AG04449 (cell line): ENCODE measurements at regions of chr17 and their contacts with region 1.

Region 1: DNA sequence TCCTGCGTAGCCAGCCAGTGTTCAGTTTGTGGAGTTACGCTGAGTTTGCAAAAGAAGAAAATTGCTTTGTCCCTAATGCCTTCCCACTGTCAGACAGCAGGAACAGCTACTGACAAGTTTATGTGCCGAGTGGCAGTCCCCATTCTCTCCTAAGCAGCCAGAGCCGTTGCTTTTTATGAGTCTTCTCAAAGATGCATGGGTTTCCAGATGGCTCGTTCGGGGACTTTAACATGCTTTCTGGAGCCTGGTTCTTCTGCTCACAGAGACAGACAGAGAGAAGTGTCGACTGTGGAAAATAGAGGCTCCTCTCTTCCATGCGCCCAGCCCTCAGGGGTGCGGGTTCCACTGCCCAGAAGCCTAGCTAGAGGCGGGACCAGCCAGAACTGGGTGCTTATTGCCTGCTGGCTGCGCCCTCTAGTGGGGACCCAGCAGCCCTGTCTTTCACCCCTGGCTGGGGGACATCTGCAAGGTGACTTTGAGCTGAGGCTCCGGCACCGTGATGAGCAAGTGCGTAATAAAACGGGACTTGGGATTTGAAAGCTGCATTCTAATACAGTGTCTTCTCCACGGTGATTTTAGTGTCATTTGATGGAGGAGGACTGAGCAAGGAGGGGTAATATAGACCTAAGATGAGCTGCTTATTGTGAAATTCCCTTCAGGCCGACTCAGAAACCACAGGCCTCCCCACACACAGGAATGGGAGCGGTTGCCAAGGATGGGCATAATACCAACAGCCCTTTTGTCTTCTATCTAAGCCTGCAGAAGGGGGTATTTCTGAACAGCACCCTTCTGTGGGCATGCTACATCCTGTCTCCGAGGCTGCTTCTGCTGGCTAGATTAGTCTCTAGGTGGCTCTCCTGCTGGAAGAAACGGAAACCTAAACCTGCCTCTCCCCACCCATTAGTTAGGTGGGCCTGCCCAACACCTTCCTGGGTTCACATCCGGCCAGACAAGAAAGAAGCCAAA is 73.1 kb downstream of the CCDC182 start:
- DNase-seq: peak; percentile 47
- H3K4me3 ChIP-seq: no peak overlapping the region
- CTCF ChIP-seq: peak; percentile 97

Region 2: DNA sequence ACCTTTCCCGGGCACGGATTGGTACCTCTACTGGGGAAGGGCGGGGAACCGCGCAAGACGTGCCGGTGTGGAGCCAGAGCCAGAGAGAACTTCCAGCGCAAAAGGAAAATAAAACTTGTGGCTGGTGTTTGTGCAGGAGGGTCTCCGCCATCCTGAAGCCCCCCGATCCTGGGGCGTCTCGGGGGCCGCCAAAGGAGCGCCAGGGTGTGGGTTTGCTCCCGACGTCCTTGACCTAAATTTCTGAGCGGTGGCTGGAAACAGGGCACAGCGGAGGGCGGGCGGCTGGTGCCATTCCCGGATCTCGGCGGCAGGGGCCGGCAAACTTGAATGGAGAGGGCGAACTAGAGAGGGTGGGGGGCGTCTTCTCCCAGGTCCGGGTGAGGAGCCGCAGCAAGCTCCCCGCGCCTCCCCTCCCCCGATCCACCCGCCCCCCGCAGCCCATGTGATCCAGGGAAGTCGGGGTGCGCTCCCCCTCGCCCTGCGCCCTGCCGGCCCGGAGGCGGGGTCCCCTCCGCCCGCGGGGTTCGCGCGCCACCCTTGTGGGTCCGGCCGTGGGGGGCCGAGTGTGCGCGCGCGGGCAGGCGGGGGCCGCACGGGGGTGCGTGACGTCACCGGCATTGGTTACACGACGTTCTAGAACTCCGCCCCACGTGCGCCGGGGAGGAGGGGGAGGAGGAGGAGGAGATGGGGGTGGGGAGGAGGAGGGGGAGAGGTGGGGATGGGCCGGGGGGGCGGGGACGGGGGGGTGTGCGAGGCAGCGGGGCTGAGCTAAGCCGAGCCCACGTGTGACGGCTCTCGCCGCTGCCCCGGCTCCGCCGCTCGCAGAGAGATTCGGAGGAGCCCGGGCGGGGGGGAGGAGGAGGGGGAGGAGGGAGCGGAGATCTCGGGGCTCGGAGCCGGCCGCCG is 415.9 kb before region 1 on chr17 and contains the start of gene MSI2:
- CTCF ChIA-PET with region 1: interaction called, 13 read pairs
- POLR2A ChIA-PET with region 1: no interaction called
- DNase-seq: peak; percentile 5
- H3K4me3 ChIP-seq: peak within 1 kb of the TSS; percentile 64
- CTCF ChIP-seq: peak; percentile 7

Region 3: DNA sequence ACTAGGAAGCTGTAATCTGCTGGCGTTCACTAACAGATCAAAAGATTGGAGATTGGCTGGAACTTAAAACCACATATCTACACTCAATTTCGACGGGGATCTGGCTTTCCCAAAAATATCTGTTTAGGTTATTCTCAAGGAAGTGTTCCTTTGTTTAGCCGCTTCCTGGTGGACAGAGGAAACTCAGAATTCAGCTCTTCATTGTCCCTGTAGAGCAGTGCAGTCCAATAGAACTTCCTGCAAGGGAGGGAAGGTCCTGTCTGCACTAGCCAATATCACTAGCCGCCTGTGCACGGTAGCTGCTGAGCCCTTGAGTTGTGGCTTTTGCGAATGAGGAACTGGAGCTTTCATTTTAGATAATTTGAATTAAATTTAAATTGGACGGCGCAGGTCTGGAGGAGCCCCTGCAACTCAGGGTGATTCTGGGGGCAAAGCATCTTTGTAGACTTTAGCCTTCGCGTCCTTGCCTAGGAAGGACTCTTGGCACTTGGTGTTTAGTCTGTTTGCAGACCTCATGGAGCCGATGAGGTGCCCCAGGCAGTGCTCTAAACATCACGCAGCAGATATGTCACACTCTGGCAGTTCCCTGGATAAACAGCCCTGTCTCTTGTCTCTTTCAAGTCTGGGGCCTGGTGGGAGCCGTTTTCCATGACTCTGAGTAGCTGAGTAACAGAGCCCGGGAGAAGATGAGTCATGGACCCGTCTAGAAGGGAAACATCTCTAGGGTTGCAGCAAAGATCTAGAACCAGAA is 49.1 kb before region 1 on chr17:
- CTCF ChIA-PET with region 1: interaction called, 14 read pairs
- POLR2A ChIA-PET with region 1: no interaction called
- DNase-seq: peak; percentile 26
- H3K4me3 ChIP-seq: no peak overlapping the region
- CTCF ChIP-seq: no peak

Region 4: DNA sequence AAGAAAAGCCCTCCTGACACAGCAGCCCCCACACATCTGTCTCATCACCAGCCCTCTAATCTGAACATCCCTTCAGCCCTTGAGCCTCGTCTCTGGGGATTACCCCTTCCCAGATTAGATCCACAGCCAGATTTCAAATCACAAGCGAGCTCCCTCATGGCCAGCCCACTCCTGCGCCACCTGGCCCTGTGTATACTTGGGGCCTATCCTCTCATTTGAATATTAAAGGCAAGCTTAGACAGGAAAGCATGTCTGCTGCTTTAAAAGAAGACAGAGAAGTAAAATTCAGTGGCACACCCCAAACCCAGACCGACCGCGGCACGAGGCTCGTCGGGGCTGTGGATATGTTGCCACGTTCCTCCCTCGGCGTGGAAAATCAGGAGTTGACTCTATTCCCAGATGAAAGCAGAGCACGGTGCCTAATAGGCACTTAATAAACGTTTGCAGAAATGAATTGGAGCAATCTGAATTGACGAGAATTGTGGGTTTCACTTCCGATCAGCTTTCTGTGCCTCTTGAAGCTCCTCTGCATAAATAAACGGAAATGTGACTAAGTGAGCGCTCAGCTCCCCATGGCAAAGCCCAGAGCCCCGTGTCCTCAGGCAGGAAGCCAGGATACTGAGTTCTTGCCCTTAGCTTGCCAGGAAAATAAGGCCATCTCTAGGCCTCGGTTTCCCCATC is 34.8 kb before region 1 on chr17:
- CTCF ChIA-PET with region 1: interaction called, 10 read pairs
- POLR2A ChIA-PET with region 1: no interaction called
- DNase-seq: no peak
- H3K4me3 ChIP-seq: no peak overlapping the region
- CTCF ChIP-seq: no peak

Region 5: DNA sequence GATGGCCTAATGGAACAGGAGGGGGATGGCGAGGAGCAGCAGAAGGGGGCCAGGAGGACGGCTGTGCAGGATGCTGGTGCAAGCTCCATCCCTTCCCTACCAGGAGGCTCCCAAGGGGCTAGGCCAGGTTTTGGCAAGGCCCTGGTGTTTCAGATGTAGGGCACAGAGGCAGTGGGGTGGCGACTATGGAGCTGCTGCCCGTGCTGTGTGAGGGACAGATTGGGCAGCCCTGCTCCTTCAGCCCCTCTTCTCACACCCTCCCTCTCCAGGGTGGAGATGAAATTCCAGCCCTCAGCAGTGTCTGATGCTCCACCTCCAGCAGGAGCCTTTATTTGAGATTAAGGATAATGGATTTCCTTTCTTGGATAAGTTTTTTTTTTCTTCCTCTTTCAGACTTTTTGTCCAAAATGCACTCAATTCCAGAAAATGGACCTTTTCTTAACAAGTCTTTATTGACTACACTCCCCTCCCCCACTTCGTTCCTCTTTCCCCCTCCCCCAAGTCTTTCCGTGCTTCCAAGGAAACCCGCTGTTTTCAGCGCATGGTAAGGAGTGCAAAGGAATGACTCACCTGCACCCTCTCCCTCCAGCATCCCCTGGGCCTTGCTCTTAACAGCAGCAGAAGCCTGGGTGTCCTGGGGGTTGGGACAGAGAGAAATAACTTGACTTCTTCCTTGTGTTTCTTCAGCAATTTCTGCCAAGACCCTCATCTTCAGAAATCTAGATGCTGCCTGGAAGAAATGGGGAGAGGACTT is 22.0 kb before region 1 on chr17:
- CTCF ChIA-PET with region 1: interaction called, 11 read pairs
- POLR2A ChIA-PET with region 1: no interaction called
- DNase-seq: no peak
- H3K4me3 ChIP-seq: no peak overlapping the region
- CTCF ChIP-seq: no peak

Region 6: DNA sequence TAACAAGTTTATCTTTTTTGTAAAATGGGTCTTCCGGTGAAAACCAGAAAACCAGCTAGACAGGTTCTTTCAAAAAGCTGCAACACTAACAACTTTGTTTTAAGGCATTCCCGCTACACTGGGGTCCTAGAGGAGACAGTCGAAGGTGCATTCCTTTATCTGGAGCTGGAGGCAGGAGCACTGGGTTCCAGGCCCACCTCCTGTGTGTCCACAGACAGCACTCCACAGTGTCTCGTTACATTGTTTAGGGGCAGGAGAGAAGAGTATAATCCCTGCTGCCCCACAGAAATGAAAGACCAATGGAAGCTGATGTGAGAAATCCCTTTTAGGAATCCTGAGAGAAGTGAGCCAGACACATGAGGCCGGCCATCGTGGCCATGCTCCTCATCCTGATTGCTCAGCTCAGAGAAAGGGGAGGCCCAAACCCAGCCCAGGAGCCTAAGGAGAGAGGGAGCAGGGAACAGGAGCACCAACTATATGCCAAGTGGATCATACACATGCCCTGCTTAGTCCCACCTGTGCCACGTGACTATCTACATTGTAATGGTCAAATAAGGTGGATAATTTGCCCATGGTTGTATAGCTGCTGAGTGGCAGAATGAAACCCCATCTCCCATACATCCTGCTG is 13.7 kb after region 1 on chr17:
- CTCF ChIA-PET with region 1: interaction called, 32 read pairs
- POLR2A ChIA-PET with region 1: no interaction called
- DNase-seq: no peak
- H3K4me3 ChIP-seq: no peak overlapping the region
- CTCF ChIP-seq: no peak

Region 7: DNA sequence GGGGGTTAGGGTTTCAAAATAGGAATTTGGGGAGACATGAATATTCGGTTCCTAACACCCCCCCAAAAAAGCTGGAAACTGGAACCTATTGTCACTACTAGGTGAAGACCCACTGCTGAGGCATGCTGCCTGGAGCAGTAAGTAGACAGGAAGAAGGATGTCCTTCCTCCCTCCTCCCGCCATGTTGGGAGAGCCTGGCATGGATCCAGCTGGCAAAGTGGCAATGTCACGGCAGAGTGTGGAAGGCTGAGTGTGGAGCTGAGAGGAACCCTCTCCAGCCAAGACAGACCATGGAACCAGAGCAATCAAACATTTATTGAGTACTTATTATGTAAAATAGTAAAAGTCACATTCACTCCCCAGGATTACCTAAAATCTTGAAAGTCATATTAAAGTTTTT is 24.1 kb after region 1 on chr17:
- CTCF ChIA-PET with region 1: interaction called, 10 read pairs
- POLR2A ChIA-PET with region 1: no interaction called
- DNase-seq: no peak
- H3K4me3 ChIP-seq: no peak overlapping the region
- CTCF ChIP-seq: no peak